ENCODE measurements at regions of chr2 and their contacts with region 1.

Region 1: GRCh38 chr2:84781942-84782716 is 98.8 kb downstream of the TRABD2A start:
- H3K4me3 Mint-ChIP-seq: no peak overlapping the region
- H3K27ac Mint-ChIP-seq: no peak overlapping the region
- H3K4me1 Mint-ChIP-seq: no peaks in the 10 kb centered on the region
- H3K27me3 Mint-ChIP-seq: no peaks in the 10 kb centered on the region

Region 2: DNA sequence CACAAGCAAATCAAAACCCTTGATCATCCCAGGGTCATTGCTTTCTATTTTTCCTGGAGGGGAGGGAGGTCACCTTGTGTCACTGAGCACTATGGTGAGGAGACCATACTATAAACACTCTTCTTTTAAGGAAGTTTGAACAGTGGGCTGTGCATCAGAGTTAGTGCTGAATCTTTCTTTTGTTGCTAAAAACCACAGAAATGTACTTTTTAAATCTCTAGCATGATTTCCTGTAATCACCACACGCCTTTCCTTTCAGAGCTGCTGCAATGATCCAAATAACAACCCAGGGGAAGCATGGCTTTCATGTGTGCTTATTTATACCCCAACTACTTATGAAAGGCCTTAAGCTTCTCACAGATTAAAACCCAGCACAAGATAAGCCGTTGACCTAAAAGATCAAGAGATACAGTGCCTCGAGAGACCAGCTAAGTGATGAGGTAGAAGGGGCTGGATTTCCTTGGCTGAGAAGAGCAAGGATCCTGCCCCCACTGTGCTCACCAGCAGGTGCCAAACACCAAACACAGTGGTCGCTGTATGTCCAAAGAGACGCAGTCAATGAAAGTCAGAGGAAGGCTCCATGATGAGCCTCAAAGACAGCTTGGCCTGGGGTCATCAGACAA is 64.0 kb after region 1 on chr2:
- intact Hi-C with region 1: loop called (anchors 10 kb)
- H3K4me3 Mint-ChIP-seq: no peak overlapping the region
- H3K27ac Mint-ChIP-seq: peak overlapping the region; percentile 56
- H3K4me1 Mint-ChIP-seq: peaks cover 31% of the 10 kb centered on the region
- H3K27me3 Mint-ChIP-seq: no peaks in the 10 kb centered on the region

Measured in dendritic cell treated with granulocyte-macrophage colony-stimulating factor and Interleukin-4, amounts not matched to agents 40 ng/mL and 50 ng/mL, for 4 days (primary cell).